Activated CD4-positive, alpha-beta memory T cell treated with anti-CD3 and anti-CD28 coated beads for 36 hours (primary cell): ENCODE measurements at regions of chr10 and their contacts with region 1.

Region 1: DNA sequence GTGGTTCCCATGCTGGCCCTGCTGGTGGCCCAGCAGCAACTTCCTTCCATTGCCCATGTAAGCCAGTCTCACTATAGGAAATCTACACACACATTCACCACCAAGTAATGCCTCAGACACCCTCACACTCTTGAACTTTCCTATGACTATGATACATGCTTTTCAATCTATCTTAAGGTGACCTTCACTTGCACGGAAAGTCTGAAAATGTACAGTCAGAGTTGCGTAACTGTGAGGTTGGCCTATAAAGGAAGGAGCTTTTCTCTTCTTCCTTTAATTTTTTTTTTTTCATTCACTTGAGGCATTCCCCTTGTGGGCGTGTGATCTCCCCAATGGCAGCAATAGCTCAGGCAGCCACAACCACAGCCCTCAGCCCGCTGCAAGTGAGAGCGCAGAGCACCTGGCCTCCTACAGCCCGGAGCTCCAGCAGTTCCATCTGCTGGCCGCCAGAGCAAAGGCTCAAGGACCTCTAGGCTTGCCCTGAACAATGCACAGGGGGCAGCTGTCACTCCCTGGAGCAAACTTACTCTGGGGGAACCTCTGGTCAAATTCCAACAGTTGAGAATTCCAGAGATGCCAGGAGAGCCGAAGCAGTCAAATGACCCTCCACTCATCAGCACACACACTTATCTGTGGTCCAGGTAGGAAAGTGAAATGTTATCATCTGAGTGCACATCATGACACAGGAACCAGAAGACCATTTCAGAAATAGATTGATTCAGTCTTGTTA is 123.1 kb upstream of the ADO start:
- DNase-seq: peak; percentile 92
- H3K4me3 Mint-ChIP-seq: no peak overlapping the region
- H3K27ac Mint-ChIP-seq: peak overlapping the region; percentile 74
- H3K4me1 Mint-ChIP-seq: peaks cover 33% of the 10 kb centered on the region
- H3K27me3 Mint-ChIP-seq: peaks cover 2% of the 10 kb centered on the region

Region 2: GRCh38 chr10:62528441-62528840 is 152.9 kb before region 1 on chr10:
- CTCF ChIA-PET with region 1: no interaction called
- POLR2A ChIA-PET with region 1: no interaction called
- intact Hi-C with region 1: loop called (anchors 2 kb)
- DNase-seq: no peak
- H3K4me3 Mint-ChIP-seq: no peak overlapping the region
- H3K27ac Mint-ChIP-seq: peak overlapping the region; percentile 15
- H3K4me1 Mint-ChIP-seq: peaks cover 33% of the 10 kb centered on the region
- H3K27me3 Mint-ChIP-seq: peaks cover 11% of the 10 kb centered on the region

Region 3: GRCh38 chr10:62643606-62644587 is 37.5 kb before region 1 on chr10:
- CTCF ChIA-PET with region 1: interaction called, 5 read pairs
- POLR2A ChIA-PET with region 1: interaction called, 24 read pairs
- intact Hi-C with region 1: loop called (anchors 1 kb)
- DNase-seq: no peak
- H3K4me3 Mint-ChIP-seq: no peak overlapping the region
- H3K27ac Mint-ChIP-seq: peak overlapping the region; percentile 11
- H3K4me1 Mint-ChIP-seq: peaks cover 36% of the 10 kb centered on the region
- H3K27me3 Mint-ChIP-seq: no peaks in the 10 kb centered on the region

Region 4: GRCh38 chr10:62726142-62726541 is 44.8 kb after region 1 on chr10:
- CTCF ChIA-PET with region 1: interaction called, 9 read pairs
- POLR2A ChIA-PET with region 1: interaction called, 5 read pairs
- intact Hi-C with region 1: loop called (anchors 1 kb)
- DNase-seq: peak; percentile 88
- H3K4me3 Mint-ChIP-seq: no peak overlapping the region
- H3K27ac Mint-ChIP-seq: peak overlapping the region; percentile 3
- H3K4me1 Mint-ChIP-seq: peaks cover 50% of the 10 kb centered on the region
- H3K27me3 Mint-ChIP-seq: peaks cover 4% of the 10 kb centered on the region

Region 5: GRCh38 chr10:62748386-62748785 is 67.0 kb after region 1 on chr10:
- CTCF ChIA-PET with region 1: interaction called, 6 read pairs
- POLR2A ChIA-PET with region 1: interaction called, 6 read pairs
- intact Hi-C with region 1: loop called (anchors 1 kb)
- DNase-seq: no peak
- H3K4me3 Mint-ChIP-seq: peak overlapping the region; percentile 12
- H3K27ac Mint-ChIP-seq: peak overlapping the region; percentile 59
- H3K4me1 Mint-ChIP-seq: peaks cover 25% of the 10 kb centered on the region
- H3K27me3 Mint-ChIP-seq: no peaks in the 10 kb centered on the region

Region 6: GRCh38 chr10:62804356-62805230 is 123.2 kb after region 1 on chr10 and contains the start of gene ADO:
- CTCF ChIA-PET with region 1: interaction called, 11 read pairs
- POLR2A ChIA-PET with region 1: interaction called, 3 read pairs
- intact Hi-C with region 1: no loop called
- DNase-seq: peak; percentile 82
- H3K4me3 Mint-ChIP-seq: peak within 1 kb of the TSS; percentile 97
- H3K27ac Mint-ChIP-seq: peak within 1 kb of the TSS; percentile 100
- H3K4me1 Mint-ChIP-seq: peaks cover 43% of the 10 kb centered on the region
- H3K27me3 Mint-ChIP-seq: no peaks in the 10 kb centered on the region
- total RNA-seq, gene ADO: 26.7 to 27.1 TPM

Region 7: GRCh38 chr10:62858364-62858763 is 177.0 kb after region 1 on chr10:
- CTCF ChIA-PET with region 1: interaction called, 3 read pairs
- POLR2A ChIA-PET with region 1: no interaction called
- intact Hi-C with region 1: loop called (anchors 1 kb)
- DNase-seq: no peak
- H3K4me3 Mint-ChIP-seq: no peak overlapping the region
- H3K27ac Mint-ChIP-seq: no peak overlapping the region
- H3K4me1 Mint-ChIP-seq: peaks cover 61% of the 10 kb centered on the region
- H3K27me3 Mint-ChIP-seq: peaks cover 9% of the 10 kb centered on the region